B cell (primary cell): ENCODE measurements at regions of chr5 and their contacts with region 1.

Region 1: GRCh38 chr5:176629853-176630712 is at the starts of genes EIF4E1B and SNCB:
- DNase-seq: peak; percentile 80
- ATAC-seq: peak; percentile 93
- H3K4me3 ChIP-seq: peak within 1 kb of the TSS; percentile 28 to 69 (median 51)
- H3K4me3 Mint-ChIP-seq: peak within 1 kb of the TSS; percentile 86
- H3K27ac ChIP-seq: no peak within 1 kb of the TSS
- H3K27ac Mint-ChIP-seq: peak within 1 kb of the TSS; percentile 16
- H3K4me1 ChIP-seq: peaks cover 55 to 65% of the 10 kb centered on the region in 2 donors
- H3K4me1 Mint-ChIP-seq: peaks cover 61% of the 10 kb centered on the region
- H3K27me3 ChIP-seq: peaks cover 0 to 39% (median 21%) of the 10 kb centered on the region in 4 experiments
- H3K27me3 Mint-ChIP-seq: peaks cover 34% of the 10 kb centered on the region
- CTCF ChIP-seq: no peak
- total RNA-seq, gene EIF4E1B: not detected in 2 replicates
- total RNA-seq, gene SNCB: not detected in 2 replicates

Region 2: GRCh38 chr5:176609724-176610434 is 20.2 kb before region 1 on chr5 and contains the start of gene GPRIN1:
- CTCF ChIA-PET with region 1: interaction called, 6 read pairs
- POLR2A ChIA-PET with region 1: no interaction called
- intact Hi-C with region 1: loop called (anchors 2 kb)
- DNase-seq: peak; percentile 82
- ATAC-seq: peak; percentile 78
- H3K4me3 ChIP-seq: peak within 1 kb of the TSS; percentile 21 to 78 (median 65)
- H3K4me3 Mint-ChIP-seq: peak within 1 kb of the TSS; percentile 98
- H3K27ac ChIP-seq: no peak within 1 kb of the TSS
- H3K27ac Mint-ChIP-seq: peak within 1 kb of the TSS; percentile 91
- H3K4me1 ChIP-seq: peaks cover 4 to 9% of the 10 kb centered on the region in 2 donors
- H3K4me1 Mint-ChIP-seq: peaks cover 12% of the 10 kb centered on the region
- H3K27me3 ChIP-seq: peaks cover 0 to 22% (median 8%) of the 10 kb centered on the region in 4 experiments
- H3K27me3 Mint-ChIP-seq: peaks cover 24% of the 10 kb centered on the region
- CTCF ChIP-seq: peak; percentile 17
- total RNA-seq, gene GPRIN1: 2.1 and 2.7 TPM in 2 replicates